ENCODE measurements at regions of chr3 and their contacts with region 1.

Region 1: GRCh38 chr3:33883538-33883950 is 85.1 kb downstream of the PDCD6IP start:
- DNase-seq: no peak
- H3K4me3 ChIP-seq: no peak overlapping the region; the same call in 1 of the 2 replicates
- H3K27ac ChIP-seq: no peak overlapping the region
- H3K27me3 ChIP-seq: peaks cover 5% of the 10 kb centered on the region
- CTCF ChIP-seq: peak; percentile 80

Region 2: GRCh38 chr3:33915791-33916546 is 32.4 kb after region 1 on chr3:
- CTCF ChIA-PET with region 1: interaction called, 11 read pairs
- POLR2A ChIA-PET with region 1: no interaction called
- DNase-seq: no peak
- H3K4me3 ChIP-seq: no peak overlapping the region
- H3K27ac ChIP-seq: no peak overlapping the region
- H3K27me3 ChIP-seq: peaks cover 9% of the 10 kb centered on the region
- CTCF ChIP-seq: peak; percentile 38; the same call in 1 of the 2 replicates

Region 3: GRCh38 chr3:34012102-34012461 is 128.5 kb after region 1 on chr3:
- CTCF ChIA-PET with region 1: interaction called, 41 read pairs
- POLR2A ChIA-PET with region 1: no interaction called
- DNase-seq: peak; percentile 94
- H3K4me3 ChIP-seq: no peak overlapping the region
- H3K27ac ChIP-seq: peak overlapping the region; percentile 79
- H3K27me3 ChIP-seq: no peaks in the 10 kb centered on the region
- CTCF ChIP-seq: no peak

Region 4: DNA sequence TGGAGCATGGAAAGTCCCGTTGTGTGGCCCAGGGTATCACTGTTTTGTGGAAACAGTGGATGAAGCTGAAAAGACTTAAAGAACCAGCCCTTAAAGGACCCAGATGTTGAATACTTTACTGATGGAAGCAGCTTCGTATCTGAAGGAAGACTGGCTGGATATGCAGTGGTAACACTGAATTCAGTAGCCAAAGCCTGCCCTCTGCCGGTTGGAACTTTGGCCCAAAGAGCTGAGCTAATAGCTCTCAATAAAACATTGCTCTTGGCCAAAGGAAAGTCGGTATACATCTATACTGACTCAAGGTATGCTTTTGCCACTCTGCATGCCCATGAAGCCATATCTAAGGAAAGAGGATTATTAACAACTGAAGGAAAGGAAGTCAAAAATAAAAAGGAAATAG is 800.3 kb after region 1 on chr3:
- CTCF ChIA-PET with region 1: interaction called, 47 read pairs
- POLR2A ChIA-PET with region 1: no interaction called
- DNase-seq: no peak
- H3K4me3 ChIP-seq: no peak overlapping the region
- H3K27ac ChIP-seq: no peak overlapping the region
- H3K27me3 ChIP-seq: no peaks in the 10 kb centered on the region
- CTCF ChIP-seq: peak; percentile 27; the same call in 1 of the 2 replicates

Measured in AG04450 (cell line).